CD8-positive, alpha-beta memory T cell (primary cell): ENCODE measurements at regions of chr11 and their contacts with region 1.

Region 1: GRCh38 chr11:67630228-67630942 is 648 bp upstream of the NUDT8 start:
- DNase-seq: peak; percentile 85 to 96 (median 95)
- H3K4me3 ChIP-seq: peak overlapping the region; percentile 72
- H3K4me3 Mint-ChIP-seq: peak overlapping the region; percentile 86 to 96 (median 91)
- H3K27ac ChIP-seq: peak overlapping the region; percentile 57
- H3K27ac Mint-ChIP-seq: peak overlapping the region in 7 of 8 donors; percentile 88 to 98 (median 91)
- H3K4me1 ChIP-seq: peaks cover 11% of the 10 kb centered on the region
- H3K4me1 Mint-ChIP-seq: peaks cover 5 to 7% (median 6%) of the 10 kb centered on the region in 3 donors
- H3K27me3 ChIP-seq: no peaks in the 10 kb centered on the region
- H3K27me3 Mint-ChIP-seq: no peaks in the 10 kb centered on the region

Region 2: DNA sequence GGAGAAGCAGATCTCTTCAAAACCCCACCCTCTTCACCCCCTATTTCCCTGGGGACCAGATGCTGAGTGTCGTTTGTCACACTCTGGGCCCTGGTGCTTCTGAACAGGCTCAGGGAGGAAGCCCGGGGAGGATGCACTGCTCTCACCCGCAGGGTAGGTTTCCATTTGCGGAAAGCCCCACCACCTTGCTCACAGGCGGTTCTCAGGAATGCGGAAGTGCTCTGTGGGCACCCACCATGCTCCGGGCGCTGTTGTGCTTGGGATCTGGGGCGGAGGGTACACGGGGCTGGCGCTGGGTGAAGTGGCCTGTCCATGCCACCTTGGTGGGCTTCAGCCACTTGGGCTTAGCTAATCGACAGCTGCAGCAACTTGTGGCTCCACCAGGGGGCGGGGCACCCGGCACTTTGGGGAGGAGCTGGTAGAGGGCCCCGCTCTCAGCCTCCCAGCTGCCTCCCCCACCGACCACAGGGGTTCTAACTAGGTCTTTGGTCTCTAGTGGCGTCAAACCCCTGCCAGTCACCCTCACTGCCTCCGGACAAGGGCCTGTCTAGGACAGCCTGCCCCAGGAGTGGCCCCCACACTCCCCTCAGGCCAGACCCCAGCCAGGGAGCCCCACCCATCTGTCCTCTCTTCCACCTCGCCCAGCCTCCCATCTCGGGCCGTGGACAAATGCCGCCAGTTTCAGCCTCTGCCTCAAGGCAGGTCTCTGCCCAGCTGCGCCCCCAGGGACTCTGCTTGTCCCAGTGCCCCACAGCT is 16.2 kb before region 1 on chr11:
- CTCF ChIA-PET with region 1: interaction called, 61 read pairs
- POLR2A ChIA-PET with region 1: interaction called, 5 read pairs
- DNase-seq: peak; percentile 80 to 89 (median 85)
- H3K4me3 ChIP-seq: peak overlapping the region; percentile 50
- H3K4me3 Mint-ChIP-seq: peak overlapping the region; percentile 82 to 89 (median 85)
- H3K27ac ChIP-seq: peak overlapping the region; percentile 86
- H3K27ac Mint-ChIP-seq: peak overlapping the region; percentile 94 to 99 (median 98)
- H3K4me1 ChIP-seq: peaks cover 33% of the 10 kb centered on the region
- H3K4me1 Mint-ChIP-seq: peaks cover 31 to 45% (median 32%) of the 10 kb centered on the region in 3 donors
- H3K27me3 ChIP-seq: no peaks in the 10 kb centered on the region
- H3K27me3 Mint-ChIP-seq: no peaks in the 10 kb centered on the region

Region 3: GRCh38 chr11:67648140-67649123 is 18.0 kb after region 1 on chr11:
- CTCF ChIA-PET with region 1: interaction called, 80 read pairs
- POLR2A ChIA-PET with region 1: interaction called, 8 read pairs
- DNase-seq: peak in 4 of 5 donors; percentile 34 to 73 (median 55)
- H3K4me3 ChIP-seq: no peak overlapping the region
- H3K4me3 Mint-ChIP-seq: peak overlapping the region in 5 of 7 donors; percentile 29 to 68 (median 39)
- H3K27ac ChIP-seq: no peak overlapping the region
- H3K27ac Mint-ChIP-seq: peak overlapping the region in 7 of 8 donors; percentile 17 to 79 (median 33)
- H3K4me1 ChIP-seq: peaks cover 44% of the 10 kb centered on the region
- H3K4me1 Mint-ChIP-seq: peaks cover 39 to 53% (median 49%) of the 10 kb centered on the region in 3 donors
- H3K27me3 ChIP-seq: no peaks in the 10 kb centered on the region
- H3K27me3 Mint-ChIP-seq: no peaks in the 10 kb centered on the region

Region 4: GRCh38 chr11:67656278-67656922 is 26.0 kb after region 1 on chr11:
- CTCF ChIA-PET with region 1: interaction called, 88 read pairs
- POLR2A ChIA-PET with region 1: interaction called, 7 read pairs
- DNase-seq: no peak
- H3K4me3 ChIP-seq: no peak overlapping the region
- H3K4me3 Mint-ChIP-seq: peak overlapping the region in 1 of 7 donors; percentile 23
- H3K27ac ChIP-seq: no peak overlapping the region
- H3K27ac Mint-ChIP-seq: peak overlapping the region in 1 of 8 donors; percentile 50
- H3K4me1 ChIP-seq: no peaks in the 10 kb centered on the region
- H3K4me1 Mint-ChIP-seq: peaks cover 0 to 12% (median 7%) of the 10 kb centered on the region in 3 donors
- H3K27me3 ChIP-seq: no peaks in the 10 kb centered on the region
- H3K27me3 Mint-ChIP-seq: no peaks in the 10 kb centered on the region